Activated T-helper 1 cell treated with anti-CD3 and anti-CD28 coated beads, Interleukin-12 subunit alpha, Interleukin-12 subunit beta, Interleukin-2, Interleukin-4 antibody, amounts not matched to agents 30 ng/mL and 10 ng/mL and 1 ng/mL, durations not matched to agents 14 hours and 24 hours and 36 hours (primary cell): ENCODE measurements at regions of chr1 and their contacts with region 1.

Region 1: DNA sequence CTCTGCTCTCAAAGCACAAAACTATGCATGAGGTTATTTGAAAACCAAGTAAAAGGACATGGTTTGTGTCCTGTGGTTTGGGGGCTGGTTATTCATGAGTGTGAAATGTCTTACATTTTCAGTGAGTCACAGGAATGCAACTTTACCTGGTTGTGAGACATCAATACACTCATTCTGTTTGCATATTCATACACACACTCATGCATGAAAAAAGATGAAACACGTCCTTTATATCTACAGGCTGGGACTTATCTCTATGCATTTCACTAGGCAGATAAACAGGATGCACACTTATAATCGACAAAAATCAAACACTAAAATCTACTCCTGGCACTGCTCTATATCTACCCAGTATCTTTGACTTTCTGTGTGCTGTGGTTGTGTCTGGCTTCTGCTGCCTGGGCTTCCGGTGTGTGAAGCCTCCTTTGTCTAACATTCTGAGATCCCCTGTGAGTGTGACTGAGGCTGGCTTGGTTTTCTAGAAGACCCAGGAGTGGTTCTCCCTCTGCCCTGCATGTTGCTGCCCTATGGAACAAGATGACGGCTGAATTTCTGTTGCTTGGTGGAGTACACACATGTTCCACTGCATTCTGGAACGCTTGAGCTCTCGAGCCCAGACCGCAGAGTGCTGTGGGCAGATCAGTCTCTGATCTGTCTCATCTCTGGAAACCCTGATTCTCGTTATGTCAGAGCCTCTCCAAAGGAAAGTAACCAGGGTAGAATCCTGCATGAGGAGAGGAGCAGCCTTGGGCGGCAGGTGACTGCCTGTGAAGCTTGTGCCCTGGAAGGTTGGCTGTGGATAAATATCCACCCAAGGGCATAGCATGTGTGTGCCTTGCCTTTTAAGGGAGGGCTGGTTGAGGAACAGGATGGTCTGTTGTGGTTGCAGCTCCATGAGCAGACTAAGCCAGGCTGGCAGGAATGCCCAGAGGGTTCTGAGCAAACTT is 19.7 kb upstream of the FASLG start:
- DNase-seq: peak; percentile 77
- H3K4me3 Mint-ChIP-seq: peak overlapping the region; percentile 62
- H3K27ac Mint-ChIP-seq: peak overlapping the region; percentile 99
- H3K4me1 Mint-ChIP-seq: peaks cover 75% of the 10 kb centered on the region
- H3K27me3 Mint-ChIP-seq: peaks cover 5% of the 10 kb centered on the region

Region 2: GRCh38 chr1:172338295-172338735 is 300.8 kb before region 1 on chr1:
- intact Hi-C with region 1: loop called (anchors 2 kb)
- DNase-seq: peak; percentile 6
- H3K4me3 Mint-ChIP-seq: no peak overlapping the region
- H3K27ac Mint-ChIP-seq: peak overlapping the region; percentile 70
- H3K4me1 Mint-ChIP-seq: peaks cover 44% of the 10 kb centered on the region
- H3K27me3 Mint-ChIP-seq: no peaks in the 10 kb centered on the region

Region 3: DNA sequence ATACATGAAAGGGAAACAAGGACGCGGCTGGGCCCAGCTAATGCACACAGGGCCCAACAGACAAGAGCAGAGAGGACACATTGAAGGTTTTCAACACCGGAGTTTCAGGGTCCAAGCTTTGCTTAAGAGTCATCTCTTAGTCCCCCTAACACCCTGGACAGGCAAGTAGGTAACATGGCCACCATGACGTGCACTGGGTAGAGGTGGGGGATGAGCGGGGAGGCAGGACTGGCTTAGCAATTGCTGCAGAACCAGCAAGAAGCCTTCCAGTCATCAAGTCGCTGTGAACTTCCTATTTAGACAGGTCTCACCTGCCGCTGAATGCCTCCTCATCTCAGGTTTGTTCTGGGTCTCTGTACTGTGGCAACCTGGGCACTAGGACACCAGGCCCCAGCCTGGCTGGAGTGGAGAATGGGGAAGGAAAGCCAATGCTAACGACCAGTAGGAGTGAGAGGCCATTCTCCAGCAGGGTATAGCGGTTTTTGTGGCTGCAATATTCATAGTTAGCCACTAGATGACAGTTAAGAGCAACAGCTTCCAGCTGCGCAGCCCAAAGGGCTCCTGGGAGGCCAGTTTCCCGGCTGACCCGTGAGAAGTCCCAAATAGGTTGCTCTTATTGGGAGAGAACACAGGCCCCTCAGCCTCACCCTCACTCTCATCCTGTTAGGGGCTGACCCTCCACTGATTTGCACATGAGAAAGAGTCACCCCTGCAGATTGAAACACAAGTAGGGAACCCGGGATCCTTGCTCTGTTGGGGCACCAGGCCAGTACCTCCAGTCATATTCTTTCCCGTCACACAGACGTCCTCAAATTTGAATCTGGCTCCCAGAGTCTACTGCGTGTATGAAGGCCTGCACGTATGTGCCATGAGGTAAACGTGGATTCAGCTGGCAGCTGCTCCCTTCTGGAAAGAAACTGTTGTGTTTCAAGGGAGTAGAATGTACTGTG is 189.3 kb before region 1 on chr1:
- intact Hi-C with region 1: loop called (anchors 1 kb)
- DNase-seq: peak; percentile 30
- H3K4me3 Mint-ChIP-seq: peak overlapping the region; percentile 43
- H3K27ac Mint-ChIP-seq: no peak overlapping the region
- H3K4me1 Mint-ChIP-seq: peaks cover 40% of the 10 kb centered on the region
- H3K27me3 Mint-ChIP-seq: peaks cover 2% of the 10 kb centered on the region

Region 4: DNA sequence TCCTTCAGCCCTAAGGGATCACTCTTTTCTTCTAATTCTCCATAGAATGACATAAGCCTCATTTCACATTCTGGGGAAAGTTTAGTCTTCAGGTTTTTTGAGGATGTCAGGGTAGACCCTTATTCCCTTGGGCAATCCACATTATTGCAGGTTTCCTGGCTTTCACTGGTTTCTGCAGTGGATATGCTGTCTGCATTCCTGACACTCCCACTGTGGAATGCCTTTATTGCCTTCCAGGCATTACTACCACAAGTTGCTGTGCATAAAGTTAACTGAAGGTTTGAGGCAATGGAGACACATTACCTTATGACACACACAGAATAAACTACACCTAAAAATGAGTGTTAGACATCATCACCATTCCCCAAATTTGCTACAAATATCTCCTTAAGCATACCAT is 32.4 kb after region 1 on chr1:
- intact Hi-C with region 1: loop called (anchors 1 kb)
- DNase-seq: no peak
- H3K4me3 Mint-ChIP-seq: no peak overlapping the region
- H3K27ac Mint-ChIP-seq: peak overlapping the region; percentile 63
- H3K4me1 Mint-ChIP-seq: peaks cover 92% of the 10 kb centered on the region
- H3K27me3 Mint-ChIP-seq: no peaks in the 10 kb centered on the region

Region 5: DNA sequence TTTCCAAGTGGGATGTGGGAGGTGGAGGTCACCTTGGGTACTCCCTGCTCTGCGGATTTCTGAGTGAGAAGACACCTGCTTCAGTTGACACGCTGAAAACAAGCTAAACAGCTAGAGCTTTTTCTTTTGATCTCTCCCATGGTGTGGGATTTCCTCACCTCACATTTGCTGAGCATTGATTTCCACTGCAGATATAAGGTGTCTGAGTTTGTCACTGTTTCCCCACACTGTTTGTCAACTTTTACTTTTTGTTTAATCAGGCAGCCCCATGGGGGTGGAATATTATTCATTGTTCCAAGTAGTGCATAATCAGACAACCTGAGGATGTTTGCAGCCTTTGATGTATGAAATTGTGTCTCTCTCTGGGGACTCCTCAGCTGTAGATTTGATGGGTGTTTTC is 69.3 kb after region 1 on chr1:
- intact Hi-C with region 1: loop called (anchors 1 kb)
- DNase-seq: peak; percentile 53
- H3K4me3 Mint-ChIP-seq: peak overlapping the region; percentile 50
- H3K27ac Mint-ChIP-seq: peak overlapping the region; percentile 86
- H3K4me1 Mint-ChIP-seq: peaks cover 18% of the 10 kb centered on the region
- H3K27me3 Mint-ChIP-seq: no peaks in the 10 kb centered on the region

Region 6: GRCh38 chr1:172818841-172819527 is 179.8 kb after region 1 on chr1:
- intact Hi-C with region 1: loop called (anchors 5 kb)
- DNase-seq: peak; percentile 37
- H3K4me3 Mint-ChIP-seq: peak overlapping the region; percentile 59
- H3K27ac Mint-ChIP-seq: peak overlapping the region; percentile 78
- H3K4me1 Mint-ChIP-seq: peaks cover 47% of the 10 kb centered on the region
- H3K27me3 Mint-ChIP-seq: peaks cover 5% of the 10 kb centered on the region

Region 7: DNA sequence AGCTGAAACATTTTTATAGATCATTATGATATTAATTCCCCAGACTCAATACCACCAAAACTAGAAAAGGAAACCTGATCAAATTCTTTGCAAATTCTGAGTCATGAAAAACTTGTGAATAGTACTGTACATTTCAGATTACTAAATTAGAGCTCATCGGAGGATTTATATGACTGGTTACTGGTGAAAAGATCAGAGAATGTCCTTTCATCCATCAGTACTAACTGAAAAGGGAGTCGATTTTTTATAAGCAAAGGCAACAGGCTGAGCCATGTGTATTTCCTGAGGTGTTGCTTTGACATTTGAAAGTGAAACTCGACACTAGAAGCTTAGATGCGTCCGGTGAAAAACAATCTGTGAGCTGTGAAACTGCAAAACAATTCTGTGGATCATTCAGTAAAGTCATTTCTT is 255.9 kb after region 1 on chr1:
- intact Hi-C with region 1: loop called (anchors 1 kb)
- DNase-seq: peak; percentile 34
- H3K4me3 Mint-ChIP-seq: peak overlapping the region; percentile 28
- H3K27ac Mint-ChIP-seq: peak overlapping the region; percentile 7
- H3K4me1 Mint-ChIP-seq: peaks cover 42% of the 10 kb centered on the region
- H3K27me3 Mint-ChIP-seq: peaks cover 13% of the 10 kb centered on the region